HepG2 (cell line): ENCODE measurements at regions of chr2 and their contacts with region 1.

Region 1: GRCh38 chr2:190880378-190881073 is at the start of gene GLS:
- DNase-seq: peak; percentile 97
- ATAC-seq: peak; percentile 91
- H3K4me3 ChIP-seq: peak within 1 kb of the TSS; percentile 85 to 97 (median 86)
- H3K27ac ChIP-seq: peak within 1 kb of the TSS; percentile 81
- H3K4me1 ChIP-seq: peaks cover 42% of the 10 kb centered on the region
- H3K27me3 ChIP-seq: no peaks in the 10 kb centered on the region; a peak in 1 of 5 replicates
- CTCF ChIP-seq: no peak
- EP300 ChIP-seq: no peak
- POLR2A ChIP-seq: peak; percentile 99 to 100
- RAD21 ChIP-seq: peak; percentile 18
- total RNA-seq, gene GLS: 183 and 212 TPM in 2 replicates

Region 2: DNA sequence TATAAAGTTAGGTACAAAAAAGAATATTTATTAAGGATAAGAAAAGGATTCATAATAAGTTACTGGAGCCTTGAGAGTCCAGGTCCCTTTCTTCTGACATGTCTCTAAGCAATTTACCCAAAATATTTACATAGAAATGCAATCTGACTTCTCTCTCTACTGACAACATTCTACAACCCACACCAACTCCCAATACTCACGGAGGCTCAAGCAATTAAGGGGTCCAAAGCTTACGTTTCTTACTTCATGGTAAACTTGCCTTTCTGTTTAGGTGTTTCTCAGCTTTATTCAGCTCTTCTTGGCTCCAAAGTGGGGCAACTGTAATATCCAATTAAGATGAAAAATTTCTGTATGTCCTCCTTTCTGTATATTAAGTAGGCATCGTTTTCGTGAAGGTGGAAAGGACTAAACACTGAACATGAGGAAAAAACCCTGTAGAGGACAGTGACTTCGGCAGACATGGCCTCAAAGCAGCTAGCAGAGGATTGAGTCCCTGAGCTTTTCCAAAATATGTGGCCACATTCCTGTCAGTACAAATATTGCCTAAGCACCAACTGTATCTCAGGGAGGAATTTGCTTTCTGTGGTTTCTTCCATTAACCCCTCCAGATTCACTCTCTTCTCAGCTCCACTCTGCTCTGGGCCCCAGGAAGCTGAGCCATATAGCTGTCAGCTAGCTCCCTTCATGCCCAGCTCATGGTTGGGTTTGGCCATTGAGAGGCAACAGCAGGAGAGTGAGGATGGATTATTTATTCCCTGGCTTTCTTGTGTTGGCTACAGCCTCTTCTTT is 67.8 kb before region 1 on chr2:
- CTCF ChIA-PET with region 1: no interaction called
- POLR2A ChIA-PET with region 1: interaction called, 88 read pairs
- in situ Hi-C with region 1: no loop called
- intact Hi-C with region 1: loop called (anchors 1 kb)
- DNase-seq: peak; percentile 90
- ATAC-seq: peak; percentile 67
- H3K4me3 ChIP-seq: peak overlapping the region; percentile 55 to 68 (median 65)
- H3K27ac ChIP-seq: peak overlapping the region; percentile 90
- H3K4me1 ChIP-seq: peaks cover 60% of the 10 kb centered on the region
- H3K27me3 ChIP-seq: no peaks in the 10 kb centered on the region
- CTCF ChIP-seq: no peak
- EP300 ChIP-seq: peak; percentile 41 to 85; a peak in 3 of 4 replicates
- POLR2A ChIP-seq: peak; percentile 51 to 92; a peak in 3 of 4 replicates
- RAD21 ChIP-seq: peak; percentile 43

Region 3: GRCh38 chr2:190853531-190854383 is 26.8 kb before region 1 on chr2:
- CTCF ChIA-PET with region 1: interaction called, 3 read pairs
- POLR2A ChIA-PET with region 1: interaction called, 4 read pairs
- in situ Hi-C with region 1: no loop called
- intact Hi-C with region 1: loop called (anchors 1 kb)
- DNase-seq: no peak
- ATAC-seq: no peak
- H3K4me3 ChIP-seq: no peak overlapping the region
- H3K27ac ChIP-seq: no peak overlapping the region
- H3K4me1 ChIP-seq: peaks cover 24% of the 10 kb centered on the region
- H3K27me3 ChIP-seq: no peaks in the 10 kb centered on the region
- CTCF ChIP-seq: no peak
- EP300 ChIP-seq: no peak
- POLR2A ChIP-seq: no peak
- RAD21 ChIP-seq: no peak

Region 4: GRCh38 chr2:190891372-190891771 is 10.8 kb after region 1 on chr2:
- CTCF ChIA-PET with region 1: no interaction called
- POLR2A ChIA-PET with region 1: interaction called, 11 read pairs
- in situ Hi-C with region 1: no loop called
- intact Hi-C with region 1: no loop called
- DNase-seq: no peak
- ATAC-seq: no peak
- H3K4me3 ChIP-seq: no peak overlapping the region
- H3K27ac ChIP-seq: no peak overlapping the region
- H3K4me1 ChIP-seq: peaks cover 42% of the 10 kb centered on the region
- H3K27me3 ChIP-seq: no peaks in the 10 kb centered on the region
- CTCF ChIP-seq: no peak
- EP300 ChIP-seq: no peak
- POLR2A ChIP-seq: no peak
- RAD21 ChIP-seq: no peak

Region 5: GRCh38 chr2:191020221-191020741 is 139.8 kb after region 1 on chr2:
- CTCF ChIA-PET with region 1: no interaction called
- POLR2A ChIA-PET with region 1: interaction called, 18 read pairs
- in situ Hi-C with region 1: no loop called
- intact Hi-C with region 1: loop called (anchors 5 kb)
- DNase-seq: peak; percentile 96
- ATAC-seq: peak; percentile 97
- H3K4me3 ChIP-seq: peak overlapping the region; percentile 90 to 96 (median 92)
- H3K27ac ChIP-seq: peak overlapping the region; percentile 98
- H3K4me1 ChIP-seq: peaks cover 32% of the 10 kb centered on the region
- H3K27me3 ChIP-seq: peaks cover 0 to 7% of the 10 kb centered on the region in 2 experiments; a peak in 1 of 5 replicates
- CTCF ChIP-seq: peak; percentile 37; the same call in 1 of the 2 replicates
- EP300 ChIP-seq: peak; percentile 92 to 100
- POLR2A ChIP-seq: peak; percentile 96 to 99
- RAD21 ChIP-seq: peak; percentile 61